ENCODE measurements at regions of chr5 and their contacts with region 1.

Region 1: DNA sequence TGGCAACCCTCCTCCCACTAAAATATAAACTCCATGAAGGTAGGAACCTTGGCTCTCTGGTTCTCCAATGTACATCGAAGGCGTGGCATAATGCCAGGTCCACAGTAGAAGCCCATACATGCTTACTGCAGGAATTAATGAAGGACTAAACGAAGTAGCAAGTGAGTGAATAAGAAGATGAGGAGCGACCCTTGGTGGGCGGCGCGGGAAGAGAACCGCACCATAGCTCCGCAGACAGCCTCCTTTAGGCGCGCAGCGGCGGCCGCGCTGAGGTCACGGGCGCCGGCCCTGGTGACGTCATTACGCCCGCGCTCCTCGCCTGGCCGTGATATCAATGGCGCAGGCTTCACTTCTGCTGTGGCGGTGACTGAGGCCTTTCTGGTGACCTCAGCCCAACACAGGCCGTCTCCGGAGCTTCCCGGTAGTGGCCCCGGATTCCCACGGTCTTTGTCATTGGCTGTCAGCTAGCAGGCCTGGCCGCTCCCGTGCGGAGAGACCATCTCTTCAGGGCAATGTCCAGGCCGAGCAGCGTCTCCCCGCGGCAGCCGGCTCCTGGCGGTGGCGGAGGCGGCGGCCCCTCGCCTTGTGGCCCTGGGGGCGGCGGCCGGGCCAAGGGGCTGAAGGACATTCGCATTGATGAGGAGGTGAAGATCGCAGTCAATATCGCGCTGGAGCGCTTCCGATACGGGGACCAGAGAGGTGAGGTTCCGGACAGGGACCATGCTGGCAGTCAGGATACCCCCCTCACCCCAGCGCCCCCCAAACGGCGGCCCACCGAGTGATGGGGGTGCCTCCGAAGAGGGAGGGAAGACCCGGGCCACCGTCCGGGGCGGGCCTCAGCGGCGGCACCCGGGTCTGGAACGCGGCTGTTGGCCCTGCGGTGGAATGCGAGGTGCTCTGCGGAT is at the start of gene YTHDC2:
- DNase-seq: peak; percentile 66 to 81
- ATAC-seq: peak; percentile 95 to 96
- H3K4me3 ChIP-seq: peak within 1 kb of the TSS; percentile 85 to 93 (median 86)
- H3K27ac ChIP-seq: peak within 1 kb of the TSS; percentile 93 to 97 (median 94)
- H3K4me1 ChIP-seq: peaks cover 17 to 22% of the 10 kb centered on the region in 2 donors
- H3K27me3 ChIP-seq: no peaks in the 10 kb centered on the region
- CTCF ChIP-seq: no peak
- POLR2A ChIP-seq: peak; percentile 49 to 65
- total RNA-seq, gene YTHDC2: 9.0 to 22.7 (median 15.3) TPM

Region 2: GRCh38 chr5:112860929-112861637 is 652.6 kb before region 1 on chr5 and contains the start of gene SRP19:
- in situ Hi-C with region 1: no loop called
- intact Hi-C with region 1: loop called (anchors 10 kb)
- DNase-seq: peak; percentile 92 to 94
- ATAC-seq: peak; percentile 99
- H3K4me3 ChIP-seq: peak within 1 kb of the TSS; percentile 71 to 99 (median 89)
- H3K27ac ChIP-seq: peak within 1 kb of the TSS; percentile 84 to 90 (median 86)
- H3K4me1 ChIP-seq: peaks cover 20 to 25% of the 10 kb centered on the region in 2 donors
- H3K27me3 ChIP-seq: no peaks in the 10 kb centered on the region
- CTCF ChIP-seq: no peak
- POLR2A ChIP-seq: peak; percentile 69 to 81
- total RNA-seq, gene SRP19: 40.4 to 63.8 (median 55.0) TPM

Region 3: GRCh38 chr5:112976432-112977309 is 537.0 kb before region 1 on chr5 and contains the start of gene DCP2:
- in situ Hi-C with region 1: loop called in 2 of 4 experiments (anchors 25 kb)
- intact Hi-C with region 1: no loop called
- DNase-seq: peak; percentile 92 to 95
- ATAC-seq: peak; percentile 100
- H3K4me3 ChIP-seq: peak within 1 kb of the TSS; percentile 69 to 97 (median 92)
- H3K27ac ChIP-seq: peak within 1 kb of the TSS; percentile 84 to 92 (median 90)
- H3K4me1 ChIP-seq: peaks cover 33 to 34% of the 10 kb centered on the region in 2 donors
- H3K27me3 ChIP-seq: no peaks in the 10 kb centered on the region
- CTCF ChIP-seq: peak in 1 of 5 experiments; percentile 1
- POLR2A ChIP-seq: peak; percentile 72 to 82
- total RNA-seq, gene DCP2: 9.8 to 30.9 (median 27.2) TPM

Region 4: GRCh38 chr5:112995764-112996618 is 517.6 kb before region 1 on chr5:
- in situ Hi-C with region 1: loop called in 2 of 4 experiments (anchors 25 kb)
- intact Hi-C with region 1: loop called (anchors 5 kb)
- DNase-seq: peak; percentile 43 to 51
- ATAC-seq: peak; percentile 80 to 91
- H3K4me3 ChIP-seq: no peak overlapping the region
- H3K27ac ChIP-seq: no peak overlapping the region
- H3K4me1 ChIP-seq: peaks cover 0 to 13% of the 10 kb centered on the region in 2 donors
- H3K27me3 ChIP-seq: no peaks in the 10 kb centered on the region
- CTCF ChIP-seq: peak; percentile 61 to 87 (median 77)
- POLR2A ChIP-seq: no peak

Region 5: GRCh38 chr5:113043491-113043931 is 470.1 kb before region 1 on chr5:
- in situ Hi-C with region 1: loop called in 1 of 4 experiments (anchors 25 kb)
- intact Hi-C with region 1: no loop called
- DNase-seq: no peak
- ATAC-seq: peak in 1 of 2 donors; percentile 31
- H3K4me3 ChIP-seq: no peak overlapping the region
- H3K27ac ChIP-seq: no peak overlapping the region
- H3K4me1 ChIP-seq: no peaks in the 10 kb centered on the region
- H3K27me3 ChIP-seq: no peaks in the 10 kb centered on the region
- CTCF ChIP-seq: peak in 2 of 5 experiments; percentile 14 to 17
- POLR2A ChIP-seq: no peak

Region 6: GRCh38 chr5:113378959-113379541 is 134.6 kb before region 1 on chr5:
- in situ Hi-C with region 1: loop called in 1 of 4 experiments (anchors 10 kb)
- intact Hi-C with region 1: loop called (anchors 2 kb)
- DNase-seq: peak; percentile 17 to 18
- ATAC-seq: peak in 1 of 2 donors; percentile 62
- H3K4me3 ChIP-seq: no peak overlapping the region
- H3K27ac ChIP-seq: no peak overlapping the region
- H3K4me1 ChIP-seq: no peaks in the 10 kb centered on the region
- H3K27me3 ChIP-seq: no peaks in the 10 kb centered on the region
- CTCF ChIP-seq: peak in 4 of 5 experiments; percentile 44 to 68 (median 55)
- POLR2A ChIP-seq: no peak

Region 7: DNA sequence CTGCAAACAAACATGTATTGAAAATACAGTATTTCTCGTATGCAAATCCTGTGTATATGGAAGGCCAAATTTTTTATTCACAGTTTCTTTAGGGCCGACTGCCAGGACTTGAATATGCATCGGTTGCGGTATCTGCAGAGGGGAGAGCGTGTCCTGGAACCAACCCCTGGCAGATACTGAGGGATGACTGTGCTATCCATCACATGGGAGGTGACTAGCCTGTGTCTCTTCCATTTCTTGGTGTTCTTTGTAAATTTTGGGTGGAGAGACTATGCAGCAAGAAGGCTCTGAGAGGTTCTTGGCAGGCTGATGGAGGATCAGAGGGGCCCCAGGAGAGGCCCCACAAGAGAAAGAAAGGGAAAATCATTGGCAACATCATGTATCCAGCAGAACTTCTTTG is 384.1 kb after region 1 on chr5:
- in situ Hi-C with region 1: no loop called
- intact Hi-C with region 1: no loop called
- DNase-seq: no peak
- ATAC-seq: no peak
- H3K4me3 ChIP-seq: no peak overlapping the region
- H3K27ac ChIP-seq: no peak overlapping the region
- H3K4me1 ChIP-seq: no peaks in the 10 kb centered on the region
- H3K27me3 ChIP-seq: no peaks in the 10 kb centered on the region
- CTCF ChIP-seq: no peak
- POLR2A ChIP-seq: no peak